ENCODE measurements at regions of chr16 and their contacts with region 1.

Region 1: DNA sequence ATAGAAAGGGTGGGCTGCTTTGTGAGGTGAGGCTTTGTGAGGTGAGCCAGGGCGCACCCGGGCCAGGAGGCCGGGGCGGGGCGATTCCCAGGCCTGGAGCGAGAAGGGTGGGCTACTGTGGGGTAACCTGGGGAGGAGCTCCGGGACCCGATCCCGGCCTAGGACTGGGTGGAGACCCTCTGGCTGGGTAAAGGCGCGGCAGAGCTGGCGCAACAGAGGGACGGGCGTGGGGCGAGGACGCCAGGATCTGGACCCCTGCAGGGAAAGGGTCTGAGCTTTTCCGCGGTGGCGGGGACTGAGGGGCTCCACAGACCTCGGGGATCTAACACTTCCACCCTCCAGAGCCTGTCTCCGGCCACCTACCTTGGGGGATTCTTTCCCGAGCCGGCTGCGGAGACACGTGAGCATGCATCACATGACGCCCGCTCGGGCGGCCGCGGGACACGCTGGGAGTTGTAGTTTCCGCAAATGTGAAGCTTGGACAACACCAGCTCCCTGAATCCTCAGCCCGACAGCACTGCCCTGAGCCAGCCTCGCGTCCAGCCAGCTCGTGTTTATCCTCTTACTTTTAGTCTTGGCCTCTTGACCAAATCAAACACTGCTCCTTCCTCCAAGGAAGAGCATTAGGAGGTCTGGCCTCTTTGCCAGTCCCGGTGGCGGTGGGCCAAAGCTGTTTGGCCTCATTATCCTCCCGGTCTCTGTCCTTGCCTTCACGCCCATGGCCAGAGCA is at the start of gene SLC38A7:
- DNase-seq: peak; percentile 94
- H3K4me3 ChIP-seq: peak within 1 kb of the TSS; percentile 70 to 95 (median 74)
- H3K27ac ChIP-seq: peak within 1 kb of the TSS; percentile 70 to 80 (median 76)
- H3K4me1 ChIP-seq: peaks cover 0 to 22% (median 18%) of the 10 kb centered on the region in 4 donors
- H3K27me3 ChIP-seq: no peaks in the 10 kb centered on the region
- CTCF ChIP-seq: no peak
- EP300 ChIP-seq: no peak
- POLR2A ChIP-seq: no peak
- total RNA-seq, gene SLC38A7: 9.5 to 17.4 (median 12.1) TPM

Region 2: GRCh38 chr16:58755989-58756649 is 71.6 kb after region 1 on chr16:
- intact Hi-C with region 1: loop called (anchors 2 kb)
- DNase-seq: peak; percentile 71
- H3K4me3 ChIP-seq: no peak overlapping the region
- H3K27ac ChIP-seq: no peak overlapping the region
- H3K4me1 ChIP-seq: no peaks in the 10 kb centered on the region
- H3K27me3 ChIP-seq: no peaks in the 10 kb centered on the region
- CTCF ChIP-seq: peak in 3 of 4 experiments; percentile 26 to 54 (median 36)
- EP300 ChIP-seq: no peak
- POLR2A ChIP-seq: no peak